ENCODE measurements at regions of chr17 and their contacts with region 1.

Region 1: DNA sequence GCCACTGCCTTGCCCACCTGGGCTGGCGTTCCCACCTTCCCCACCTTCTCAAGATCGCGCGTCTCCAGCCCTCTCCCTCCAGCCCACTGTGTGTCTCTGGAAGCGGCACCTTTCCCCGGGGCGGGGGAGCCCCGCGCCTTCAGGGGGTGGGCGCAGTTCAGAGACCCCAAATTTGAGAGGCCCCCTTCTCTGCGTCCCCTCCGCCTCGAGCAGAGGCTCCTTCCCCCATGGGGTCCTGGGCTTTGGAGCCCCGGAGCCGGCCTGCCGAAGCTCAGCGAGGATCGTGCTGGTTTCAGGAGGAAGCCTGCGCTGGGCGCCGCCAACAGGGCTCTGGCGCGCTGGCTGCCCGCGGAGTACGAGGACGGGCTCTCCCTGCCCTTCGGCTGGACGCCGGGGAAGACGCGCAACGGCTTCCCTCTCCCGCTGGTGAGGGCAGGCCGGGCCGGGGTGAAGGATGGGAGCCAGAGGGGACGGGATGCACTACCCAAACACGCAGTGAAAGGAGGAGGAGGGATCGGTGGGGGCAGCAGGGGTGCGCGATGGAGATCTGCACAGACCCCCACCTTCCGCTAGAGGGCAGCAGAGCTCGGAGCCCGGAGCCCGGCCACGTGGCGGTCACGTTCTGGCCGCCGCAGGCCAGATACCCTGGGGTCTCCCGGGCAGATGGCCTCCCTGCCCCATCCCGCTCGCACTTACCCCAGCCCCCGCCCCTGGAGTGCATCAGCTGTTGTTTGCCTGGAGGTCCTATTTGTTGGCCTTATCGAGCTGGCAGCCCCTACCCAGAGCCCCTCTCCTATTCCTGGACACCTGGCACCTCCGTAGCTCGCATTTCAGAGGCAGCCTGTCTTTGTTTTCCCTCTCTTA is 11.1 kb downstream of the LPO start:
- DNase-seq: peak; percentile 82
- ATAC-seq: peak; percentile 84
- H3K4me3 Mint-ChIP-seq: peak overlapping the region; percentile 56
- H3K27ac Mint-ChIP-seq: no peak overlapping the region
- H3K4me1 Mint-ChIP-seq: peaks cover 11% of the 10 kb centered on the region
- H3K27me3 Mint-ChIP-seq: peaks cover 94% of the 10 kb centered on the region
- CTCF ChIP-seq: peak; percentile 98

Region 2: DNA sequence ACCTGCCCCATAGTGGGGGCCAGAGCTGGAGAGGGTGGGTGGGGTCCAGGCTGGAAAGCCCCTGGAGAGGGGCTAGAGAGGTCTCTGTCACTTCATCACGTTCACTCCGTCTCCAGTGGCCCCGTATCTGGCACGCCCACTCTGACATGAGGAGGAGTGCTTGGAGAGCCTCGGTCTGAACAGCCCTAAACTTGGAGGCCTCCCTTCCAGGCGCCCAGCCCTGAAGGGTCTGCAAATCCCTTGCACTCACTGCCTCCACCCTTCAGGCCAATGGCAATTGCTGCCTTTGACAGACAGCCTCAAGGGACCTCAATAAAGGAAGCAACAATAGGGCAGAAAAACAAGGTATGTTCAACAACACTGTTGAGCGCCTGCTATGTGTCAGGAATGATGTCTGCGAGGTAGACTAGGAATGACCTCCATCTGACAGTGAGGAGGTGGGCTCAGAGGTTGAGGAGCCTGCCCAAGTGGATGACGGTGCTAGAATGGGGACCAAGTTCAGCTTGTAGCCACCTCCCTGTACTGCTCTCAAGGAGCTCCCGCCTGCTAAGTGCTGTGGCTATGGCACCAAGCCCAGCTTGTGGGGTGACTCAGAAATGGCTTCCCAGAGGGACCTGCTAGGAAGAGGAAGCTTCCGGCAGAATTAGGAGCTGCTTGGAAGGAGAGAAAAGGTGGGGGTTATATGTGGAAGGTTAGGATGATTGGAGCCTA is 59.9 kb before region 1 on chr17:
- CTCF ChIA-PET with region 1: interaction called, 11 read pairs
- POLR2A ChIA-PET with region 1: no interaction called
- DNase-seq: no peak
- ATAC-seq: no peak
- H3K4me3 Mint-ChIP-seq: no peak overlapping the region
- H3K27ac Mint-ChIP-seq: no peak overlapping the region
- H3K4me1 Mint-ChIP-seq: peaks cover 9% of the 10 kb centered on the region
- H3K27me3 Mint-ChIP-seq: peaks cover 6% of the 10 kb centered on the region; the same call in 1 of the 2 replicates
- CTCF ChIP-seq: no peak

Region 3: DNA sequence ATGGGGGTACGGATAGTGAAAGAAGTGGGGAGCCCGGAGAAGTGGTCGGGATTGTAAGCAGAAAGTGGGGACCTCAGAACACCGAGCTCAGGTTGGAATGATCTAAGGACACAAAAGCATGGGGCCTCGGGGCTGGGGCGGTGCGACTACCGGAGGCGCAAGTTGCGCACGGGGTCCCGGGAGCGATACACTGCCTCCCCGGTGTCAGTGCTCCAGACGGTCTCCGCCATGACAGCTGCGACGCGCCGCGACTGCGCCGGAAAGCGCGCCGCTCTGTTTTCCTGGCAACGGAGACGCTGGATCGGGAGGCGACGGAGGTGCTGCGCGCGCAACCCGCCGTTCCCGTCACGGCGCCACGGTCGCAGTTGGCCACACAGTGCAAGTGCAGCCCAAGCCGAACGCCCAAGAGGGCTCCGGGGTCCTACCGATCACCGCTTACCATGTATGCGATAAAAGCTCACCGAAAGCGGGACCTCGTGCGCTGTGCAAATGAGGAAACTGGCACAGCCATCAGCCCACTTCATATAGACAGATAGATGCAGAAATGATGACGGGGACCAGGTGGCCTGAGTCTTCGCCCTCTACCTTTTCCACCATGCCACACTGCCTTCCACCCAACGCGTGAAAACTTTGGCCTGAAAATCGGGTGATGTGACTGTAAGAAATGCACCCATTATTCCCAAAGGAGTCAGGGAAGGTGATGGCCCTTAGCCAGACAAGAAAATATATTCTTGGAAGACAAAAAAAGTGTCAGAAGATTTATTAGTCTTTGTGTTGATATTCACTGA is 30.3 kb before region 1 on chr17 and contains the start of gene MKS1:
- CTCF ChIA-PET with region 1: interaction called, 15 read pairs
- POLR2A ChIA-PET with region 1: no interaction called
- DNase-seq: peak; percentile 97
- ATAC-seq: peak; percentile 100
- H3K4me3 Mint-ChIP-seq: peak within 1 kb of the TSS; percentile 93
- H3K27ac Mint-ChIP-seq: peak within 1 kb of the TSS; percentile 92
- H3K4me1 Mint-ChIP-seq: peaks cover 9% of the 10 kb centered on the region
- H3K27me3 Mint-ChIP-seq: peaks cover 30% of the 10 kb centered on the region
- CTCF ChIP-seq: no peak
- total RNA-seq, gene MKS1: 18.6 to 24.2 TPM (median 18.9 TPM) in 3 replicates

Region 4: GRCh38 chr17:58232707-58233156 is 16.8 kb before region 1 on chr17:
- CTCF ChIA-PET with region 1: interaction called, 22 read pairs
- POLR2A ChIA-PET with region 1: interaction called, 3 read pairs
- DNase-seq: peak; percentile 16
- ATAC-seq: peak; percentile 64
- H3K4me3 Mint-ChIP-seq: no peak overlapping the region
- H3K27ac Mint-ChIP-seq: no peak overlapping the region
- H3K4me1 Mint-ChIP-seq: peaks cover 11% of the 10 kb centered on the region
- H3K27me3 Mint-ChIP-seq: peaks cover 72% of the 10 kb centered on the region
- CTCF ChIP-seq: no peak

Region 5: DNA sequence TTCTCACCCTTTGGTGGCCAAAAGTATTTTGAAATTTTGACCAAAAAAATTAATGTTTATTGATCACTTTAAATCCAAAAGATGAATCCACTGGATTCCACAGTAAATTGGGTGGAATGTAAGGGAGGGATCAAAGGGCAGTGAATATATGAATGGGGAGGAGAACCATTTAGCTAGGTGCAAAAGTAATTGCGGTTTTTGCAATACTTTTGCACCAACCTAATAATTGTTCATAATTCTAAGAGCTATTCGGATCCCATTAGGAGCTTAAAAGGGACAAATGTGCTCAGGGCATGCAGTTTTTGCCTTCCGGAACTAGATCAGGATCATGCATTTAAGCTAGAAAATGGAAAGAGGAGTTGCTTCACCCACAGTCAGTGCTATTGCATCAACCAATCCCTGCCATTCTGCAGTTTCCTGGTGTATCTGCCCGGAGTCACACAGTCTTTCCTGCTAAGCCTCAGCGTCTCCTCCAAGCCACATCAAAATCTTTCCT is 11.3 kb before region 1 on chr17 and contains the start of gene LPO:
- CTCF ChIA-PET with region 1: interaction called, 22 read pairs
- POLR2A ChIA-PET with region 1: no interaction called
- DNase-seq: no peak
- ATAC-seq: no peak
- H3K4me3 Mint-ChIP-seq: no peak within 1 kb of the TSS
- H3K27ac Mint-ChIP-seq: no peak within 1 kb of the TSS
- H3K4me1 Mint-ChIP-seq: no peaks in the 10 kb centered on the region
- H3K27me3 Mint-ChIP-seq: peaks cover 82% of the 10 kb centered on the region
- CTCF ChIP-seq: no peak
- total RNA-seq, gene LPO: 0.20 to 0.50 TPM (median 0.23 TPM) in 3 replicates

Measured in WTC11 (cell line).